ENCODE measurements at regions of chr1 and their contacts with region 1.

Region 1: DNA sequence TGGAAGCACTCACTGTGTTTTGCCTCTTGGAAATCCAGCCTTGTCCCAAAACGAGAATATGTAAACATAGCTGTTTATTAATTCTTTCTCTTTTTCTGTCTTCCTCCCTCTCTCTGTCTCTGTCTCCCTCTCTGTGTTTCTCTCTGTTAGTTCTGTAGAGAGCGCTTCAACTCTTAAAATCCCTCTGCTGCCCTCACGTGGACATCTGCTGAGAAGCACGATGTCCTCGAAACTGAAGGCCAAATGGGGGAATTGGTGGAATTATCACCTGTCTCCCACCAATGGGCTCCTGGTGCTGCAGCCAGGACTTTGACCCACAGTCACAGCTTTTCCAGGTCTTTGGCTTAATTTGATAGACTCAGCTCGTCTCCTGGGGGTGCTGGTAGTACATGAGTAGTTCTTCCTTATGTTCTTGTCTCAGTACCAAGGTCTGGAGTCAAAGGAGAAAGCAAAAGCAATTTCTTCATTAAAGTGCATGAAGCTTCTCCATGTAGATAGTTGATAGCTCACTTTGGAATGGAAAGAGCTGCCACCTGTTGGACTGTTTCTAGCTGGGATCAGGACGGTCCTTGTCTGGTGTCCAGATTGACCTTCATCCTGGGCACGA is 5.5 kb upstream of the GBP6 start:
- DNase-seq: peak; percentile 61
- ATAC-seq: peak; percentile 87
- H3K4me3 Mint-ChIP-seq: no peak overlapping the region
- H3K27ac Mint-ChIP-seq: no peak overlapping the region
- H3K4me1 Mint-ChIP-seq: peaks cover 4% of the 10 kb centered on the region
- H3K27me3 Mint-ChIP-seq: no peaks in the 10 kb centered on the region
- CTCF ChIP-seq: peak; percentile 77

Region 2: GRCh38 chr1:88973520-88974137 is 384.8 kb before region 1 on chr1:
- CTCF ChIA-PET with region 1: interaction called, 3 read pairs
- POLR2A ChIA-PET with region 1: no interaction called
- intact Hi-C with region 1: loop called (anchors 1 kb)
- DNase-seq: no peak
- ATAC-seq: no peak
- H3K4me3 Mint-ChIP-seq: no peak overlapping the region
- H3K27ac Mint-ChIP-seq: no peak overlapping the region
- H3K4me1 Mint-ChIP-seq: peaks cover 20% of the 10 kb centered on the region
- H3K27me3 Mint-ChIP-seq: no peaks in the 10 kb centered on the region
- CTCF ChIP-seq: peak; percentile 77

Region 3: GRCh38 chr1:88998716-88999115 is 359.7 kb before region 1 on chr1:
- CTCF ChIA-PET with region 1: interaction called, 66 read pairs
- POLR2A ChIA-PET with region 1: no interaction called
- intact Hi-C with region 1: loop called (anchors 1 kb)
- DNase-seq: no peak
- ATAC-seq: peak; percentile 88
- H3K4me3 Mint-ChIP-seq: no peak overlapping the region
- H3K27ac Mint-ChIP-seq: no peak overlapping the region
- H3K4me1 Mint-ChIP-seq: peaks cover 6% of the 10 kb centered on the region
- H3K27me3 Mint-ChIP-seq: no peaks in the 10 kb centered on the region
- CTCF ChIP-seq: no peak

Region 4: DNA sequence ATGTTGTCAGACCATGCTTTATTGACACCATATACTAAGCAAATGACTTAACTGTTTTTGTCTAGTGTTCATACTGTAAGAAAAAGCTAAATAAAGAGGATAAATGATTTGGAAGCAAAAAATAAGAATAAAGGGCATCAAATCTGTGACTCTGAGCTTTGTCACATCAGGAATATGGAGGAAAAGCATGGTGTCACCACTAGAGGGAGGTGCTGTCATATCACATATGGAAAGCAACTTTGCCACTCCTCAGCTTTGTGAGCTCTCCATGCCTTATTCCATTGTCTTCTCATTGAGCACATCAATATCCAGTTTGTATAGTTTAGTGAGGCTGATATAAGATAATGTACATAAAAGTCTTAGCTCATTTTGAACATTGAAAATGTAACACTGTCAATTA is 272.6 kb before region 1 on chr1:
- CTCF ChIA-PET with region 1: interaction called, 39 read pairs
- POLR2A ChIA-PET with region 1: no interaction called
- intact Hi-C with region 1: loop called (anchors 1 kb)
- DNase-seq: no peak
- ATAC-seq: peak; percentile 37
- H3K4me3 Mint-ChIP-seq: no peak overlapping the region
- H3K27ac Mint-ChIP-seq: no peak overlapping the region
- H3K4me1 Mint-ChIP-seq: peaks cover 4% of the 10 kb centered on the region
- H3K27me3 Mint-ChIP-seq: no peaks in the 10 kb centered on the region
- CTCF ChIP-seq: no peak

Region 5: DNA sequence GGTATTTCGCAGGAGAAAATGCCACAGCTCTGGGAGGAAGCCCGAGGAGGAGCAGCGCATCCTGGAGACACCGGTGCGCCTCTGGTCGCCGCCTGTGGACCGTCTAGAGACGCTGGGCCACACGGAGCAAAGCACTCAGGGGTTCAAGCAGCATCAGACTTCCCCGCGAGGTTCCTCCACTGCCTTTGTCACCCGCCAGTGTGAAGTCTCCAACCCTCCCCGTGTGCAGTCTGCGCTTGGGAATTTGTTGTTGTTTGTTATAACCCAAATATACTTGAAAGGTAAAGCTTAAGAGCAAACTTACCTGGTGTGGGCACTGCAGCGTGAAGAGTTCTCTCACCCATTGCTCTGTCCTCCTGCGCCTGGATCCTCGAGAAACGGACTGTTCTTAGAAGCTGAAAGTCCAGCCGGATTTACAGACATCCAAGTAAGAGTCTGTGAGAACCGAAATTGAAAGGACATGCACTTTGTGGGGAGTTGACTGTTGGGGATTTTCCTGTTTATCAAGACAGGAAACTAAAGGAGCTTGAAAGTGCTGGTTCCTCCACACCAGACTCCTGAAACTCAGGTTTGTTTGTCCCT is 159.8 kb before region 1 on chr1 and contains the start of gene GBP4:
- CTCF ChIA-PET with region 1: interaction called, 8 read pairs
- POLR2A ChIA-PET with region 1: interaction called, 3 read pairs
- intact Hi-C with region 1: loop called (anchors 2 kb)
- DNase-seq: peak; percentile 27
- ATAC-seq: peak; percentile 47
- H3K4me3 Mint-ChIP-seq: peak within 1 kb of the TSS; percentile 96
- H3K27ac Mint-ChIP-seq: peak within 1 kb of the TSS; percentile 92
- H3K4me1 Mint-ChIP-seq: peaks cover 76% of the 10 kb centered on the region
- H3K27me3 Mint-ChIP-seq: no peaks in the 10 kb centered on the region
- CTCF ChIP-seq: no peak
- total RNA-seq, gene GBP4: 19.2 and 19.5 TPM in 2 replicates

Region 6: GRCh38 chr1:89433421-89433820 is 75.0 kb after region 1 on chr1:
- CTCF ChIA-PET with region 1: no interaction called
- POLR2A ChIA-PET with region 1: no interaction called
- intact Hi-C with region 1: no loop called
- DNase-seq: no peak
- ATAC-seq: no peak
- H3K4me3 Mint-ChIP-seq: no peak overlapping the region
- H3K27ac Mint-ChIP-seq: no peak overlapping the region
- H3K4me1 Mint-ChIP-seq: no peaks in the 10 kb centered on the region
- H3K27me3 Mint-ChIP-seq: peaks cover 8% of the 10 kb centered on the region
- CTCF ChIP-seq: no peak

Region 7: DNA sequence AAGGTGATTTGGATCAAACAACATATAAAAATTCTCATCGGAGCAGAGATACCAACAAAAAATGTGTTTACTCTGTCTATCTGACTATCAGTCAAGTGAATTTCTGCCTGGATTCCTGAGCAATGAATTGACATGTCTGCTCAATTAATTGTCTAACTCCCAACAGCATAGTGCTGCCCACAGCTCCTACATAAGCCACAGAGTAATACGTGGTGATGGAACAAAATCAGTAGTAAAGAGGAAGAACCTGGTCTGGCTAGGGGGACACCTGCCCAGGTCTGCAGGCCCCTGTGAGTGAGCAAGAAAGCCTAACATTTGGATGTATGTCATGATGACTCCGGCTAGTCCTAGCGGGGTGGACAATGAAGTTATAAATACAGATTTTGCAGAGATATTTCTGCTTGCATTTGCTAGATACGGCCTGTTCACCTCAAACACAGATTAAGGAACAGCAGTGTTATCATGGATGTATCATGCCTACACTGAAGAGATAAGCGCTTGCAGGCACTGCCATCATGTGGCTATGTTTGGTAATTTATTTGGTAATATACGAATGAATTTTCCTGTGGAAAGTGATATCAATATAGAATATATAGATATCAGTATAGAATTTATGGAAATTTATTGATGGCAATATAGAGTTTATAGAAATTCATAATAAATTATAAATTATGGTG is 96.6 kb after region 1 on chr1:
- CTCF ChIA-PET with region 1: interaction called, 6 read pairs
- POLR2A ChIA-PET with region 1: no interaction called
- intact Hi-C with region 1: loop called (anchors 1 kb)
- DNase-seq: no peak
- ATAC-seq: peak; percentile 79
- H3K4me3 Mint-ChIP-seq: no peak overlapping the region
- H3K27ac Mint-ChIP-seq: no peak overlapping the region
- H3K4me1 Mint-ChIP-seq: no peaks in the 10 kb centered on the region
- H3K27me3 Mint-ChIP-seq: peaks cover 2% of the 10 kb centered on the region
- CTCF ChIP-seq: peak; percentile 41